PC-3 (cell line): ENCODE measurements at regions of chr16 and their contacts with region 1.

Region 1: GRCh38 chr16:3134564-3135417 is at the start of gene ZNF213:
- DNase-seq: peak; percentile 95
- ATAC-seq: peak; percentile 94
- H3K4me3 ChIP-seq: peak within 1 kb of the TSS; percentile 99
- H3K27ac ChIP-seq: peak within 1 kb of the TSS; percentile 67
- H3K4me1 ChIP-seq: peaks cover 6% of the 10 kb centered on the region; the same call in 1 of the 2 replicates
- H3K27me3 ChIP-seq: no peaks in the 10 kb centered on the region
- CTCF ChIP-seq: no peak
- total RNA-seq, gene ZNF213: 3.6 and 9.6 TPM in 2 replicates

Region 2: DNA sequence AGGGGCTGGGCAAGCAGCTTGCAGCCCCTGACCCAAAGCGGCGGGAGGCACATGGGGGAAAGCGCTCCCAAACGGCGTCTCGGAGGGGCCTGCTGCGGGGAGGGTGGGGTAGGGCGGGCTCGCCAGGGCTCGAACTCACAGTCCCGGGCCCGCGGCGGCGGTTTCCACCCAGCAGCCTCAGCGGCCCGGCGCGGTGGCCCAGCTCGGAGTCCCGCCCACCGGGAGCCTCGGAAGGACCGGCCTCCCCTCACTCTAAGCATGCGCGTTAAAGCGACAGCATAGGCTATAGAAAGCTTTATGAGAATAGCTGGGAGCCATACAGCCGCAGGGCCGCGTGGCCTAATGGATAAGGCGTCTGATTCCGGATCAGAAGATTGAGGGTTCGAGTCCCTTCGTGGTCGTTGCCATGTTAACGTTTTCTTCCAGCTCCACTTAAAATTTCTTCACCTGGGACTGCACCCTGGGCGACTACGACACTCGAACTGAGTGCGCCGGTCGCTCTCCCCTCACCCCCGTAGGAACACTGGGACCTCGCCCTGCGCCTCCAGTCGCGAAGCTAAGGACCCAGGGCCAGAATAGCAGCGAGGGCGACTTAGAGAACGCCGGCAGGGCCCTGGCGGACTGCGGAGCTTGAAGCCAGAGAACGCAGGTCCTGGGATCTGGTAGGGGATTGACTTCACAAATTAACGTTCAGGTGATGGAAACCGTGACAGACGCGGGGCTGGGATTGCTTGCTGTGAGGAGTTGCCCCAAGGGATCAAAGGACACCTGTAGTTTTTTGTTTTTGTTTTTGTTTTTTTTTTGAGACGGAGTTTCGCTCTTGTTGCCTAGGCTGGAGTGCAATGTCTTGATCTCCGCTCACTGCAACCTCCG is 15.8 kb after region 1 on chr16:
- CTCF ChIA-PET with region 1: no interaction called
- POLR2A ChIA-PET with region 1: interaction called, 12 read pairs
- intact Hi-C with region 1: loop called (anchors 1 kb)
- DNase-seq: peak; percentile 99
- ATAC-seq: peak; percentile 75
- H3K4me3 ChIP-seq: peak overlapping the region; percentile 85
- H3K27ac ChIP-seq: peak overlapping the region; percentile 71
- H3K4me1 ChIP-seq: peaks cover 9% of the 10 kb centered on the region; the same call in 1 of the 2 replicates
- H3K27me3 ChIP-seq: no peaks in the 10 kb centered on the region
- CTCF ChIP-seq: no peak